ENCODE measurements at regions of chr9 and their contacts with region 1.

Region 1: GRCh38 chr9:128528445-128529160 is 23.8 kb upstream of the SPTAN1 start:
- DNase-seq: no peak
- H3K4me3 ChIP-seq: no peak overlapping the region
- H3K27ac ChIP-seq: no peak overlapping the region
- H3K4me1 ChIP-seq: peaks cover 1% of the 10 kb centered on the region
- H3K27me3 ChIP-seq: no peaks in the 10 kb centered on the region
- CTCF ChIP-seq: no peak

Region 2: DNA sequence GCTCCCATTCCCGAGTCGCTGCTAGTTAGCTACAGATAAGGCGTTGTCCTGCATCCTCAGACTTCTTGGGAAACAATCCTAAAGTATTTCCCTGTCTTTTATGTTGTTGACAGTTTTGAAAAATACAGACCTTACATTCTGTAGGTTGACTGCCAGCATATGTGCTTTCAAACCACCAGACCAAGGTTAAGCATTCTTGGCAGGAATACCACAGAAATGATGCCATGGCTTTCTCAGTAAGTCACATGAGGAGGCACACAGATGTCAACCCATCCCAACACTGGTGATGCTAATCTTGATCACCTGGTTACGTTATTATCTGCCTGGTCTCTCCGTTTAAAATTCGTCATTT is 23.2 kb before region 1 on chr9:
- CTCF ChIA-PET with region 1: no interaction called
- POLR2A ChIA-PET with region 1: interaction called, 12 read pairs
- intact Hi-C with region 1: no loop called
- DNase-seq: no peak
- H3K4me3 ChIP-seq: peak overlapping the region; percentile 79
- H3K27ac ChIP-seq: peak overlapping the region; percentile 74
- H3K4me1 ChIP-seq: peaks cover 6% of the 10 kb centered on the region
- H3K27me3 ChIP-seq: no peaks in the 10 kb centered on the region
- CTCF ChIP-seq: no peak

Measured in A673 (cell line).